ENCODE measurements at regions of chr11 and their contacts with region 1.

Region 1: GRCh38 chr11:18721561-18722292 is 4.3 kb downstream of the IGSF22 start:
- DNase-seq: peak; percentile 51
- H3K4me3 ChIP-seq: peak overlapping the region; percentile 40 to 61 (median 60)
- H3K27ac ChIP-seq: no peak overlapping the region
- H3K4me1 ChIP-seq: peaks cover 7% of the 10 kb centered on the region
- H3K27me3 ChIP-seq: peaks cover 0 to 3% of the 10 kb centered on the region in 2 experiments
- CTCF ChIP-seq: peak; percentile 73 to 82
- POLR2A ChIP-seq: no peak

Region 2: DNA sequence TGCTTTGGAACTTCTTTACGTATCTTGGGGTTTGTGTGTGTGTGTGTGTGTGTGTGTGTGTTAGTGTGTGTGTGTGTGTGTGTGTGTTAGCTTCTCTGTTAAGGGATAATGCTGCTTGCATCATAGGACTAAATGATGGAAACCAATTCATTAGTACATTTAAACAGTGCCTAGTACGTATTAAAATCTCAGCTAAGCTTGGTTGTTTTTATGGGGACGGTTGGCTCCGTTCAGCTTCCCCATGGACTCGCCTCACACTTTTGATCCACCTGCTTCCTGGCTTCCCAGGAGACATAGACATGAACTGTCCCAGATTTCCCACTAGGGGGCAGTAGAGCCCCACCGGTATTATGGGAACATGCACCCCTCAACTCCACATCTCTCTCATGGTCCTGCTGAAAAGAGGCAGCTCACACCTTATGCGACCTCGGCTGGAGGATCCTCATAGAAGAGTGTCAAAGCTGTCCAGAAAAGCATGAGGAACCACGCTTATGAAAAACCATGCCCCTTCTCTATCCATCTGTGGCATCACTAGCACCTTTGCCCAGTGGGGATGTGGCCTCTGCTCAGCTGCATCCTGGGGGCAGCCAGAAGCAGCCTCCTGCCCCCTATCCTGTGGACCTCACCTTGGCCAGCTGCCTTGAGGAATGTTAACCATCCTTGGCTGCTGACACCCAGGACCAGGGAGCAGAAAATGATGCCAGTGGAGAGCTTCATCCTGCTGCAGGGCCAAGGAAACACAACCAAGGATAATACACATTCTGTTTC is 606.2 kb before region 1 on chr11:
- CTCF ChIA-PET with region 1: interaction called, 14 read pairs
- POLR2A ChIA-PET with region 1: no interaction called
- dilution Hi-C with region 1: no loop called
- intact Hi-C with region 1: no loop called
- DNase-seq: peak; percentile 62
- H3K4me3 ChIP-seq: no peak overlapping the region
- H3K27ac ChIP-seq: no peak overlapping the region
- H3K4me1 ChIP-seq: no peaks in the 10 kb centered on the region
- H3K27me3 ChIP-seq: peaks cover 10 to 30% of the 10 kb centered on the region in 2 experiments
- CTCF ChIP-seq: peak; percentile 80 to 81
- POLR2A ChIP-seq: no peak

Region 3: DNA sequence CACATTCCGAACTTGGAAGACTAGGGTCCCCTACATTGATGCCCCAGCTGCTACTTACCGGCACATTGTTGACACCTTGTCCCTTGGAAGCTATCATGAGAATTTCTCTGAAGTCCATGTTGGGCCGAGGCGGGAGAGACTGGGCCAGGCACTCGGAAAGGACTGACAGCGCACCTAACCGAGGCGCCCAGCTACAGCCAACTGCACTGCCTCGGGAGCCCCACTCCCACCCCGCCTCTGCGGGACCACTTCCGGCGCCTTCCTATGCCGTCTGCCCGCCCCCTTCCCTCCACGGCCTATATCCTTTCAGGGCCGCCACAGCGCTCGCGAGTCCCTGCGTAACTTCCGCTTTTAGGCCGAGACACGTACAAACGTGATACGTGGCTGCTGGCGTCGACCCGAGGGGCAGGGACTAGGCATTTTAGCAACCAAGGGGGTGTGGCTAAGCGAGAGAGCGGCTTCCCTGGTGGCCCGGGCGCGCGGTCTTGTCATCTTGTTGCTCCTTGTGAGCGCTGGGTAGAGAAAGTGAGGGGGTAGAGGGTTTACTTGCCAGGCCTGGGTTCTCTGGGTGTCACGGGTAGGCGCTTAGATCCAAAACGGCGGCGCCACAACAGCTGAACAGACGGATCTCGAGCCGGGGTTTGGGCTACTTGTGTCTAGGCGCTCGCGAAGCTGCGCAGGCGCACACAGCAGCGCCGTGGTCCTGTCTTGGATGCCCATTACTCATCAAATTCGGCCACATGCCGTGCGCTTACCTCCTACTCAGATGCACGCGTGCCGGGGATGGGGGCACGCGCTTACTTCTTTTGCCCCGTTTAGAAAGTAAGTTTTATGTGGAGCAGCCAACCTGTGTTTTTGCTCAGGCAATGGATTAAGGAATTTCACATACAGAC is 87.3 kb before region 1 on chr11 and contains the start of gene SPTY2D1:
- CTCF ChIA-PET with region 1: interaction called, 11 read pairs
- POLR2A ChIA-PET with region 1: no interaction called
- dilution Hi-C with region 1: no loop called
- intact Hi-C with region 1: no loop called
- DNase-seq: peak; percentile 99
- H3K4me3 ChIP-seq: peak within 1 kb of the TSS; percentile 79 to 99 (median 97)
- H3K27ac ChIP-seq: peak within 1 kb of the TSS; percentile 83
- H3K4me1 ChIP-seq: peaks cover 16% of the 10 kb centered on the region
- H3K27me3 ChIP-seq: peaks cover 0 to 1% of the 10 kb centered on the region in 2 experiments
- CTCF ChIP-seq: no peak
- POLR2A ChIP-seq: peak; percentile 96
- total RNA-seq, gene SPTY2D1: 13.7 and 18.7 TPM in 2 replicates

Region 4: DNA sequence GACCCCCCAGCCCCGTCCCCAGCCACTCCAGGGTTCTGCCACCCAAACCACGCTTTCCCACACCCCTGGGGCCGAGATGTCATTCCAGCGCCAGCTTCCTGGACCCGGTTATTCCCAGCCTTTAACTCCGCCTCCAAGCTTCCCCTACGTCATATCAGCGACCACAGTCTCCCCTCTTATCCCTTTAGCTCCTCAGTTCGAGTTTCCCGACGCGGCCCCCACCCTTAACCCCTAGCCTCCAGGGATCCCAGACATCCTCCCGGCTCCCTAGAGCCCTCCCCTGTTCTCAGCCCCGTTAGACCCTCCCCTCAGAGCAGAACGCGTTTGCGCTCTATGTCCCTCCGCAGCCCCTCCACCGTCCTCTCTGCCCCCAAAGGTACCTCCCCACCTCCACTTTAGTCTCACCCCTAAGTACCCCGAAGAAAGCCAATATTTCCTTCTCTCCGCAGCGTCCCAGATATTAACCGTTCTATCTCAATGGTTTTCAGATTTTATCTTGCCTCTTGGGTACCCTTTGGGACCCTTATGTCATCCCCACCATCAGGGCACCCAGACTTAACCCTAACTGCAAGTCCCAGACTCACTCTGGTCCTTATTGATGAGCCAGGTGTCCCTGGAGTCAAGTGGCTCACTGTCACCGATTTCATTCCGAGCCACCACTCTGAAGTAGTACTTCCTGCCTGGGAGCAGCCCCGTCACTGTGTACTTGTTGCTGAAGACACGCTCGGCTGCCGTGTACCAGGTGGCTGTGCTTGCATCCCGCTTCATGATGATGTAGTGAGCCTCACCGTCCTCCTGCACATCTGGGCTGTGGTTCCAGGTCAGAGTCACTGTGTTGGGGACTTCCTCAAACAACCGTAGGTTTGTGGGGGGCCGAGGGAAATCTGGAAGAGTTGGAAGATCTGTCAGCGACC is 15.1 kb before region 1 on chr11:
- CTCF ChIA-PET with region 1: interaction called, 20 read pairs
- POLR2A ChIA-PET with region 1: no interaction called
- dilution Hi-C with region 1: no loop called
- intact Hi-C with region 1: loop called (anchors 2 kb)
- DNase-seq: peak; percentile 32
- H3K4me3 ChIP-seq: peak overlapping the region in 2 of 3 experiments; percentile 25 to 55
- H3K27ac ChIP-seq: no peak overlapping the region
- H3K4me1 ChIP-seq: peaks cover 6% of the 10 kb centered on the region
- H3K27me3 ChIP-seq: peaks cover 16 to 26% of the 10 kb centered on the region in 2 experiments
- CTCF ChIP-seq: no peak
- POLR2A ChIP-seq: no peak

Region 5: DNA sequence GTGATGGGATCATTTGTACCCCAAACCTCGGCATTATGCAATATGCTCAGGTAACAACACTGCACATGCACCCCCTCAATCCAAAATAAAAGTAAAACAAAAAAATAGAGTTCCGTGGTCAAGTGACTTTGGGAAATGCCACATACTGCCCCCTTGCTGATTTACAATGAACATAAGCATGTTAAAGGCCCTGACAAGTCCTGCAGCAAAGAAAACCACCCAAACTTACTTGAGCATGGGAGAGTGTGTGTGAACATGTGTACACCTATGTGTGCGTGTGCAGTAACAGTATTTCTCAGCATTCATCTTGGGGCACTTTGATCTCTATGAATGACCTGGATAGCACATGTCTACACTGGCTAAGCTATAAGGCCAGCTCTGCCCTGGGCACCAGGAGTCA is 20.1 kb after region 1 on chr11:
- CTCF ChIA-PET with region 1: interaction called, 43 read pairs
- POLR2A ChIA-PET with region 1: no interaction called
- dilution Hi-C with region 1: no loop called
- intact Hi-C with region 1: no loop called
- DNase-seq: no peak
- H3K4me3 ChIP-seq: no peak overlapping the region
- H3K27ac ChIP-seq: no peak overlapping the region
- H3K4me1 ChIP-seq: no peaks in the 10 kb centered on the region
- H3K27me3 ChIP-seq: peaks cover 0 to under 1% of the 10 kb centered on the region in 2 experiments
- CTCF ChIP-seq: no peak
- POLR2A ChIP-seq: no peak

Region 6: GRCh38 chr11:18757811-18758210 is 36.1 kb after region 1 on chr11:
- CTCF ChIA-PET with region 1: interaction called, 10 read pairs
- POLR2A ChIA-PET with region 1: no interaction called
- dilution Hi-C with region 1: no loop called
- intact Hi-C with region 1: no loop called
- DNase-seq: no peak
- H3K4me3 ChIP-seq: no peak overlapping the region
- H3K27ac ChIP-seq: no peak overlapping the region
- H3K4me1 ChIP-seq: no peaks in the 10 kb centered on the region
- H3K27me3 ChIP-seq: peaks cover 0 to 11% of the 10 kb centered on the region in 2 experiments
- CTCF ChIP-seq: no peak
- POLR2A ChIP-seq: no peak

Region 7: DNA sequence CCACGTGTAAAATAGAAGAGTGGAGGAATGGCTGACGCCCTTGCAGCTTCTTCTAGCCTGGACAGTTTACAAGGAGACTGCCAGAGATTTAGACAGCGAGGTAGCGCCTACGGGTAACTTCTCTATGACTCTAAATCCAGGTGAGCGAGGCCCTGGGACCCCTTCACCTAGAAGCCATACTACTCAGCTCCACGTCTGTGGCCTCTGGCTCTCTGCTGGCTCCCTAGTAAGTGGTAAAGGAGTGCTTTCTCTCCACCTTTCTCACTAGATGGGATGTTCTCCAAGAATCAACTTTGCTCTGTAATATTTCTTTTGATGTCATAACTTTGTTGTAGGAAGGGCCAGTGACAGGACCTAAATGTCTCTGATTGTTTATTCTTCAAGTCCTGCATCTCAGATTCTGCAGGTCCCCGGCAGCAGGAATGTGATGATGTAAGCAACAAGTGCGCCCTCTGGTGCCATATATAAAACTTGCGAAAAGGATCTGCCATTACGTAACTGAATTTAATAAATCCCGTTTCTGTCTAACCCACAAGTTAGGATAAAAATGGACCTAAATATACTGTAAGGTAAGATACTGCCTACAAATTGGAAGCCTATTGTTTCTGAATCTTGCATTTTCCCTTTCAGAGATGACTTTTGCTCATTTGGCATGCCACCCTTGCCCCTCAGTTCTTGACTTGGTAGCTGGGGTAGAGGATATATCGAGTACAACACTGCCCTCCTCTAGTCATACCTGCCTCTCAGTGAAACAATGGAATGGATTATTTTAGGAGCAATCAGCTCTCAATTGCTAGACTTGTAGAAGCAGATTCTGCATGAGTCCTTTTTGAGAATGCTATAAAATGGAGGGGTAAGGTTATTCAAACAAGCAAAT is 80.9 kb after region 1 on chr11:
- CTCF ChIA-PET with region 1: interaction called, 4 read pairs
- POLR2A ChIA-PET with region 1: no interaction called
- dilution Hi-C with region 1: no loop called
- intact Hi-C with region 1: loop called (anchors 5 kb)
- DNase-seq: peak; percentile 69
- H3K4me3 ChIP-seq: no peak overlapping the region
- H3K27ac ChIP-seq: no peak overlapping the region
- H3K4me1 ChIP-seq: peaks cover 3% of the 10 kb centered on the region
- H3K27me3 ChIP-seq: peaks cover 8 to 13% of the 10 kb centered on the region in 2 experiments
- CTCF ChIP-seq: peak; percentile 53 to 57
- POLR2A ChIP-seq: no peak

Region 8: GRCh38 chr11:18853086-18853720 is 131.5 kb after region 1 on chr11:
- CTCF ChIA-PET with region 1: no interaction called
- POLR2A ChIA-PET with region 1: no interaction called
- dilution Hi-C with region 1: no loop called
- intact Hi-C with region 1: no loop called
- DNase-seq: peak; percentile 17
- H3K4me3 ChIP-seq: no peak overlapping the region
- H3K27ac ChIP-seq: no peak overlapping the region
- H3K4me1 ChIP-seq: no peaks in the 10 kb centered on the region
- H3K27me3 ChIP-seq: peaks cover 0 to 7% of the 10 kb centered on the region in 2 experiments
- CTCF ChIP-seq: peak; percentile 23 to 46
- POLR2A ChIP-seq: no peak

Measured in endothelial cell of umbilical vein (primary cell).